Heart right ventricle (tissue), 16 donors: ENCODE measurements at regions of chr18 and their contacts with region 1.

Region 1: GRCh38 chr18:53644799-53645471 is 579.5 kb downstream of the MBD2 start:
- DNase-seq: no peak
- ATAC-seq: peak in 1 of 8 donors; percentile 16
- H3K4me3 ChIP-seq: no peak overlapping the region
- H3K27ac ChIP-seq: no peak overlapping the region
- H3K4me1 ChIP-seq: peaks cover 0 to 8% (median 0%) of the 10 kb centered on the region in 9 donors
- H3K27me3 ChIP-seq: no peaks in the 10 kb centered on the region
- CTCF ChIP-seq: no peak

Region 2: GRCh38 chr18:53033128-53033527 is 611.8 kb before region 1 on chr18:
- intact Hi-C with region 1: loop called in 1 of 10 experiments (anchors 10 kb)
- DNase-seq: no peak
- ATAC-seq: no peak
- H3K4me3 ChIP-seq: no peak overlapping the region
- H3K27ac ChIP-seq: no peak overlapping the region
- H3K4me1 ChIP-seq: no peaks in the 10 kb centered on the region
- H3K27me3 ChIP-seq: no peaks in the 10 kb centered on the region
- CTCF ChIP-seq: no peak

Region 3: DNA sequence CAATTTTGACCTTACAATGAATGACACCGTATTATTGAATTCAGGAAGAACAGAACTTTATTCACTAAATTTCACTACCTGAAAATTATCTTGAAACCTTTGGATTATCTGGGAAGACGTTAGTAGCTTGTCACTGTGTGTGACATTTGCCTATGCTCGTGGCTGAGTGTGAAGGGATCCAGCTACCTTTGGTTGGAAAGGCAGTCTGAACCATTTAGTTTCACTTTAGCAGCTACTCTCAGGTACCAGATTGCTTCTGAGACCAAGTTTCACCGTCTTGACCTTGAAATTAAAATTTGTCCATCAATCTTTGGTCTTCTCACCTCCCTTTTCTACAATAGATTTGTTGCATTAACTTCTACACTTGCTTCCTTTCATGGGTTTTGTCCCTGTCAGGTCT is 58.0 kb before region 1 on chr18:
- intact Hi-C with region 1: no loop called
- DNase-seq: no peak
- ATAC-seq: no peak
- H3K4me3 ChIP-seq: no peak overlapping the region
- H3K27ac ChIP-seq: no peak overlapping the region
- H3K4me1 ChIP-seq: no peaks in the 10 kb centered on the region
- H3K27me3 ChIP-seq: no peaks in the 10 kb centered on the region
- CTCF ChIP-seq: no peak

Region 4: DNA sequence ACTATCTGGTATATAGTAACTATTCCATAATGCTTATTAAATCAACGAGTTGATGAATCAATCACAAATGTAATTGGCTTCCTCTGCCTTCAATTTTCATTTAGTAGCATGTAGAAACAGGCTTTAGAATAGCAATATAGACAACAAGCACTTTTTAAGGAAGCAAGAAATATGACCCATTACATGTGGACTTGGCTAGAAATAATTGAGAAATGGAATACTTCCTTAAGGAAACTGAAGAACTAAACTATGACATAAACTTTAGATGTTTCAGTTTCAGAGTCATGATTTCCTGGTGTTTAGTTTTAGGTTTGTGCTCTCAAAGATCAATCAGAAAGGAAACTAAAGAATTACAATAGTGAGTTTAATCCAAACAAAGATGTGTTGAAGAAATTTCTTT is 135.7 kb after region 1 on chr18:
- intact Hi-C with region 1: no loop called
- DNase-seq: no peak
- ATAC-seq: no peak
- H3K4me3 ChIP-seq: no peak overlapping the region
- H3K27ac ChIP-seq: no peak overlapping the region
- H3K4me1 ChIP-seq: no peaks in the 10 kb centered on the region
- H3K27me3 ChIP-seq: no peaks in the 10 kb centered on the region
- CTCF ChIP-seq: no peak